ENCODE measurements at regions of chr3 and their contacts with region 1.

Region 1: DNA sequence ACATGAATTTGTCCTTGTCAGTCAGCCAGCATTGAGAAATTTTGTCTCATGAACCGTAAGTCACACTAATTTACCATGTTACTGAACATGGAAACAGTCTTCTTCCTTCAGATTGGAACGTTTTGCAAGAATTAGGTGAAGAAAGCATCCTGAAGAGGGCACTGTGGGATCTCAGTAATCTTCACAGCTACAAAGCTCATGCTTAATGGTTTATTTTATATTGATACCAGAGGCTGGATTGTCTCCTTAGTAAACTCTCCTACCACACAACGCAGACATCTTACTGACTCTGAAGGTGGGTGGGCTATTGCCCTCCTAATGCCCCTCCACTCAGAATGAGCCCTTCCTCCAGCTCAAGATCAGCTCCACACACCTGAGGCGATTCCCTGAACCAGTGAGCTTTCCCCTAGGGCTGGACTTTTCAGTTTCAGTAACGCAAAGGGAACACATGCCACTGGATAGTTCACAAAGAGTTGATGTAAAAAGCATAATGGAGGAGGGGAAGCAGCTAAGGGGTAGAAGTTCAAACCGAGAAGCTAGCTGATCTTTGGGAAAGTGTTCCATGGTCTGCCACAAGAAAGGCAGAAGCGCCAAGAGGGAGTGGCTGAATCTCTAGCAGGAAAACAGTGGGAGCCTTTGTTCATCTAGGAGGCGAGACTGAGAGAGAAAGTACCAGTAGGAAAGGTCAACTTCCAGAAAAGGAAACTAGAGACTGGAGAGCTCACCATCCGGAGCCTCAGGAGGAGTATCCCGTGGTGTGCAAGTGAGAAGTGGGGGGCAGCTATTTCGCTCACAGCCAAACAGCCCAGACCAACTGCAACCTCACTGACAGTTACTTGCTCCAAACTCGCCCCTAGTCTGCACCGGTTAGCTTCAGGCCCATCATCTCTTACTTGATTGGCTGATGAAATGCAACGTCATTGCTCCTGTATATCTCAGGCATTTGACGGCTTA is at the start of gene SLC9C1:
- DNase-seq: peak; percentile 36
- H3K4me3 Mint-ChIP-seq: peak within 1 kb of the TSS; percentile 72
- H3K27ac Mint-ChIP-seq: peak within 1 kb of the TSS; percentile 79
- H3K4me1 Mint-ChIP-seq: peaks cover 49% of the 10 kb centered on the region
- H3K27me3 Mint-ChIP-seq: no peaks in the 10 kb centered on the region
- total RNA-seq, gene SLC9C1: not detected in 2 replicates

Region 2: DNA sequence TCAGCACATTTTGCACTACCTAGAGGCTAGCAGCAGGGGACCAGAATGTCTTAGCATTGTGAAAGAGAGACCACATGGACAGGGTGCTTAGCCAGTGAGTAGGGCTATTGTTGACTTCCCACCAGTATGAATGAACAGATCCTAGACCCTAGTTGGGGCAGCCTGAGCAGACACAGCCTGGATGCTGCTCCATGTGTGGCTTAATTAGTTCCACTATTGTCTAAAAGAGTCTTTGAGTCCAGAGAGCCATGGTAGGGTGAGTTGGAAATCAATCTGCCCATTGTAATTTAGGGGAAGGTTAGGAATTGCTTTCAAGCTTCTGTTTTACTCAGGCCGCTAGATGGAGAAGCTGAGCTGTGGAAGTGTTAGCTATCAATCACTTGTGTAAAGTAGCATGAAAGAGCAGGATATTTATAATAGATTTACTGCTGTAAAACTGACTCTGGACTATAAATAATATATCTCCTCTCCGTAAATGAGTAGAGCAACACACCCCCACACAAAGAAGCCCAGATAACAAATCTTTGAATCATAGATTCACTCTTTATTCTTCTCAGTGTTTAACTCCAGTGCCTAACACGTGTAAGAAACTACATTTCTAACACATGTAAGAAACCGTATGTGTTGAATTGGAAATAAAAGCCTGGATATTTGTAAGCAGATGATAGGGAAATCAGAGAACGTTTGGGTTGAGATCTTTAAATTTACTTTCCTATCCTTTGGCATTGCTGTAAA is 156.5 kb before region 1 on chr3:
- intact Hi-C with region 1: loop called (anchors 2 kb)
- DNase-seq: no peak
- H3K4me3 Mint-ChIP-seq: no peak overlapping the region
- H3K27ac Mint-ChIP-seq: peak overlapping the region; percentile 6
- H3K4me1 Mint-ChIP-seq: peaks cover 54% of the 10 kb centered on the region
- H3K27me3 Mint-ChIP-seq: no peaks in the 10 kb centered on the region

Region 3: DNA sequence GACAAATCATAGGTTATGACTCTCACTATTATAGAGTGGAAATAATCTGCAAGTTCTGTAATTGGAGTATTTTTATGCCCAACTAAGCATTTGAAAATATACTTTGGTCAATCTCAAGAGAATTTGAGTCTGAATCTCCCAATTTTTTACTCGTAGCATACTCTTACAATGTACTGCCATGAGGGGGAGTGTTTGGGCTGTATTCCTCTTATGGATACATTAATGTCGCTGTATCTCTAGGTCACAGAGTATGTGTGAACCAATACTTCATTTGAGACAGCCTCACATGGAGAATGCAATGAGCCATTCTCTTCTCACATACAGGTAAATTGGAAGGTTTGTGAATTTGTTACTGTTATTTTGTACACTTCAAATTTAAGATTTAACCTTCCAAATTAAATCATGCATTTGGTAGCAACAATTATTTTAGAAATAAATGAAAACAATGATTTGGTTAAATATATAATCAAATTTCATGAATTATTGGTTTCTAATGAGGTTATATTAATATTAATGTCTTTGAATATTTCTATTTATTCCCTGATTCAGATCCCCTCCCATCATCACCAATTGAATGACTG is 33.8 kb after region 1 on chr3:
- intact Hi-C with region 1: loop called (anchors 2 kb)
- DNase-seq: peak; percentile 38
- H3K4me3 Mint-ChIP-seq: no peak overlapping the region
- H3K27ac Mint-ChIP-seq: no peak overlapping the region
- H3K4me1 Mint-ChIP-seq: no peaks in the 10 kb centered on the region
- H3K27me3 Mint-ChIP-seq: peaks cover 1% of the 10 kb centered on the region

Region 4: GRCh38 chr3:112531358-112531781 is 237.7 kb after region 1 on chr3:
- intact Hi-C with region 1: loop called (anchors 1 kb)
- DNase-seq: no peak
- H3K4me3 Mint-ChIP-seq: no peak overlapping the region
- H3K27ac Mint-ChIP-seq: no peak overlapping the region
- H3K4me1 Mint-ChIP-seq: peaks cover 5% of the 10 kb centered on the region
- H3K27me3 Mint-ChIP-seq: no peaks in the 10 kb centered on the region

Measured in activated T-helper 1 cell treated with anti-CD3 and anti-CD28 coated beads, Interleukin-12 subunit alpha, Interleukin-12 subunit beta, Interleukin-2, Interleukin-4 antibody, amounts not matched to agents 30 ng/mL and 10 ng/mL and 1 ng/mL, durations not matched to agents 14 hours and 24 hours and 36 hours (primary cell).